ENCODE measurements at regions of chr11 and their contacts with region 1.

Region 1: DNA sequence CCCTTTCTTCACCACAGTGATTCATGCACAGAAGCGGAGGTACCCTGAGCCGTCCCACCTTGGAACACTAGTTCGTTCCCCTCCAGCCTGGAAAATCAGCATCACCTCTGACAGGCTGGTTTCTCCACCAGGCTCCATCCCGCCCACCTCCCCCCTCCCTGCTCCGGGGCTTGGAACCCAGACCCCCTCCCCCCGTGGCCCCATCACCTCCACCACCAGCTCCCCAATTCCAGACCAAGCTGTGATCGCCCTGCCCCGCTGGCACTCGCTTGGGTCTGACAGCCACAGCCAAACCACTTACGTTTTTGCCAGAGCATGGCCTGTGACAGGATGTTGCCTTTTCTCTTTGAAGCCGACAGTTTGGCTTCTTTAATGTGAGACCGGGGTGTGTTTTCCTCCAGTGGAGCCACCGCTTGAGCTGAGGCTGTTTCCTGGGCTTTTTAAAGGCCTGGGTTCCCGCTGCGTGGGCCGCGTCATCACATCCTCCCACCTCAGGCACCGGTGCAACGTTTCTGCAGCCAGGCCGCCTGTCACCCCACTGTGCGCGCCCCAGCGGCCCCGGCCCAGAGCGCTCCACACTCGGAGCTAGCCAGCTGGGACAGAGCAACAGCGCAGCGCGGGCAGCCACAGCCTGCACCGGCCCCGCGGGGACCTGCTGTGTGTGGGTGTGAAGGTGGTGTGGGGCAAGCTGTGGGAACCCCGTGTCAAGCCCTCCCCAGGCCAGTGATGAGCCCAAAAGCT is at the start of gene POU2AF1:
- DNase-seq: peak; percentile 88
- H3K4me3 Mint-ChIP-seq: peak within 1 kb of the TSS; percentile 62
- H3K27ac Mint-ChIP-seq: peak within 1 kb of the TSS; percentile 86
- H3K4me1 Mint-ChIP-seq: peaks cover 51% of the 10 kb centered on the region
- H3K27me3 Mint-ChIP-seq: no peaks in the 10 kb centered on the region
- total RNA-seq, gene POU2AF1: 26.9 to 28.3 TPM

Region 2: GRCh38 chr11:111399187-111400031 is 20.4 kb after region 1 on chr11:
- CTCF ChIA-PET with region 1: no interaction called
- POLR2A ChIA-PET with region 1: interaction called, 7 read pairs
- intact Hi-C with region 1: loop called (anchors 1 kb)
- DNase-seq: no peak
- H3K4me3 Mint-ChIP-seq: no peak overlapping the region
- H3K27ac Mint-ChIP-seq: no peak overlapping the region
- H3K4me1 Mint-ChIP-seq: peaks cover 7% of the 10 kb centered on the region
- H3K27me3 Mint-ChIP-seq: no peaks in the 10 kb centered on the region

Region 3: GRCh38 chr11:111409915-111410314 is 30.9 kb after region 1 on chr11:
- CTCF ChIA-PET with region 1: no interaction called
- POLR2A ChIA-PET with region 1: interaction called, 49 read pairs
- intact Hi-C with region 1: loop called (anchors 1 kb)
- DNase-seq: no peak
- H3K4me3 Mint-ChIP-seq: no peak overlapping the region
- H3K27ac Mint-ChIP-seq: no peak overlapping the region
- H3K4me1 Mint-ChIP-seq: peaks cover 39% of the 10 kb centered on the region
- H3K27me3 Mint-ChIP-seq: no peaks in the 10 kb centered on the region

Region 4: GRCh38 chr11:111526501-111526900 is 147.5 kb after region 1 on chr11:
- CTCF ChIA-PET with region 1: no interaction called
- POLR2A ChIA-PET with region 1: no interaction called
- intact Hi-C with region 1: loop called (anchors 1 kb)
- DNase-seq: peak; percentile 43
- H3K4me3 Mint-ChIP-seq: no peak overlapping the region
- H3K27ac Mint-ChIP-seq: no peak overlapping the region
- H3K4me1 Mint-ChIP-seq: peaks cover 28% of the 10 kb centered on the region
- H3K27me3 Mint-ChIP-seq: peaks cover 15% of the 10 kb centered on the region

Measured in activated CD4-positive, alpha-beta memory T cell treated with anti-CD3 and anti-CD28 coated beads for 36 hours (primary cell).